ENCODE measurements at regions of chrX and their contacts with region 1.

Region 1: GRCh38 chrX:24542756-24543155 is 77.7 kb downstream of the PDK3 start:
- DNase-seq: no peak
- H3K4me3 ChIP-seq: no peak overlapping the region
- H3K27ac ChIP-seq: no peak overlapping the region
- H3K4me1 ChIP-seq: no peaks in the 10 kb centered on the region
- H3K27me3 ChIP-seq: no peaks in the 10 kb centered on the region
- CTCF ChIP-seq: no peak
- POLR2A ChIP-seq: no peak

Region 2: DNA sequence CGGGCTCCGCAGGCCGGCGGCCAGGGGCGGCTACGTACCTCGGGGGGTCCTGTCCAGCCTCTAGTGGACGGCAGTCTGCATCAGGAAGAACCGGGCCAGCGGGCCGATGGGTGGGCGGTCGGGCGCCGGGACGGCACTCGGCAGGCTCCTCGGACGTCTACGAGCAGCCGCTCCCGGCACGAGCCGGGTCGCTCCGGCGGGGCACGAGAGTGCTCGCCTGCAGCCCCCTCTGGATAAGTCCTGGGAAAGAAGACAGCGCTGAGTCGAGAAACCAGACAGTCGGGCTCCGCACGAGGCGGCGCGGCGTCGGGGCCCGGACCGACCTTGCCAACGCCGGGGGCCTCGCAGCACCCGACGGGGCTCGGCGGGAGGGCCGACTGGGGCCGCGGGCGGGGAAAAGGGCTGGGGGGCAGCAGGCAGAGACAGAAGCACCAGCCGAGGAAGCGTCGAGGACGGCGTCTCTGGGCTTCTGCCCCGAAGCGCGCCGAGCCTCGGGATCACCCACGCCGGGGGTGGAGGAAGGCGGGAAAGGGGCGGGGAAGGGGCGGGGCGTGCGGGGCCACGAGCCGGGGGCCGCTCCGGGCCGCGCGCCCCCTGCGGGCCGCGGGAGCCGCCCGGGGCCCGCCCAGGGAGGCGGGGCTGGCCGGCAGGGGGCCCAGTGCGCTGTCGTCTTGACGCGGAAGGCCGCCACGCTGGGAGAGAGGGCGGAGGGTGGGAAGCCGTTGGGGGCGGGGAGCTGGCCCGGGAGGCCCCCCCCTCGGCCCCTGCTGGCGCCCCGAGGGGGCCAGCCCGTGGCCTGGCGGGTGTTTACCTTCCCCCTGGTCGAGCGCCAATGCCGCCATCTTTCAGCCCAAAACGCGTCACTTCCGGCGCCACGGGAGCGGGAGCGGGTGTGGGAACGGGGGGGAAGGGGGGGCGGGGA is 517.7 kb before region 1 on chrX:
- intact Hi-C with region 1: no loop called
- DNase-seq: peak; percentile 86 to 91
- H3K4me3 ChIP-seq: peak overlapping the region; percentile 54 to 74
- H3K27ac ChIP-seq: peak overlapping the region; percentile 92 to 97
- H3K4me1 ChIP-seq: no peaks in the 10 kb centered on the region
- H3K27me3 ChIP-seq: peaks cover 0 to 4% of the 10 kb centered on the region in 2 donors
- CTCF ChIP-seq: peak in 2 of 4 experiments; percentile 24 to 39
- POLR2A ChIP-seq: peak; percentile 66 to 83

Region 3: GRCh38 chrX:24426391-24426790 is 116.4 kb before region 1 on chrX:
- intact Hi-C with region 1: no loop called
- DNase-seq: no peak
- H3K4me3 ChIP-seq: no peak overlapping the region
- H3K27ac ChIP-seq: peak overlapping the region in 1 of 2 donors; percentile 59
- H3K4me1 ChIP-seq: peaks cover 0 to 6% of the 10 kb centered on the region in 2 donors
- H3K27me3 ChIP-seq: no peaks in the 10 kb centered on the region
- CTCF ChIP-seq: no peak
- POLR2A ChIP-seq: no peak

Region 4: GRCh38 chrX:24590111-24590510 is 47.4 kb after region 1 on chrX:
- intact Hi-C with region 1: no loop called
- DNase-seq: no peak
- H3K4me3 ChIP-seq: no peak overlapping the region
- H3K27ac ChIP-seq: no peak overlapping the region
- H3K4me1 ChIP-seq: no peaks in the 10 kb centered on the region
- H3K27me3 ChIP-seq: no peaks in the 10 kb centered on the region
- CTCF ChIP-seq: no peak
- POLR2A ChIP-seq: no peak

Region 5: DNA sequence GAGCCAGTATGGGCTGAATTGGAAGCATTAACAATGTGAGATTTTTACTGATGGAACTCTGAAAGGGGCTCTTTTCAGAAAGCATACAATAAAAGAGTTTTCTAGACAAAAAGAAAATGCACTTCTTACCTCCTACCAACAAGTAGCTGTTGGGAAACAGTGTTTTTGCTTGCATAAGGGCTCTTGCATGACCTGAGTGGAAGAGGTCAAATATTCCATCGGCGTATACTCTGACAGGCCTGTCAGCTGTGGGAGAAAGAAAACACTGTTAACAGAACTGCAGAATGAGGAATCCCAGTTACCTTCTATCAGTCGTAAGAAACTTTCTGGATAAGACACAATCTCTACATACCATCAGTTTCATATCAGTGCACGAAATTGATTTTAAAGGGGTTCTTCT is 64.9 kb after region 1 on chrX:
- intact Hi-C with region 1: loop called (anchors 10 kb)
- DNase-seq: no peak
- H3K4me3 ChIP-seq: no peak overlapping the region
- H3K27ac ChIP-seq: no peak overlapping the region
- H3K4me1 ChIP-seq: no peaks in the 10 kb centered on the region
- H3K27me3 ChIP-seq: no peaks in the 10 kb centered on the region
- CTCF ChIP-seq: no peak
- POLR2A ChIP-seq: no peak

Measured in uterus (tissue), 4 donors.